Activated CD4-positive, alpha-beta T cell treated with anti-CD3 and anti-CD28 coated beads, Interleukin-2, amount 10 ng/mL, durations not matched to agents 7 days and 5 days (primary cell): ENCODE measurements at regions of chr2 and their contacts with region 1.

Region 1: DNA sequence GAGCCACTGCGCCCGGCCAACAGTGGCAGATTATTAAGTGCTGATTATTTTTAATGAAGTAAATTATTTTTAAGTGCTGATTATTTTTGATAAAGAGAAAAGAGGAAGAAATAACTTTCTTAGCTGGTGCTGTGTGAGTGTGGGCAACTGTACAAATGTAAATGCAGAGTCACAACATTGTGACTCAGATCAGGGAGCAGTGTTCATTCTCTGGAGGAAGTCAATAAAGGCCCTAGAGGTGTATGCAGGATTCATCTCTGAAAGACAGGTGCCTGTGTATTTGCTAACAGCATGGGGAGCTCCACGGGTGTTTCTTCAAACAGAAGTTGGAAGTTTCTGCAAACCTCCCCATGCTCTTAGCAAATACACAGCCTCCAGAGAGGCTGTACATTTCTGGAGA is 6.2 kb downstream of the KRTCAP3 start:
- DNase-seq: no peak
- H3K4me3 Mint-ChIP-seq: no peak overlapping the region
- H3K27ac Mint-ChIP-seq: peak overlapping the region; percentile 38
- H3K4me1 Mint-ChIP-seq: peaks cover 10% of the 10 kb centered on the region
- H3K27me3 Mint-ChIP-seq: no peaks in the 10 kb centered on the region

Region 2: DNA sequence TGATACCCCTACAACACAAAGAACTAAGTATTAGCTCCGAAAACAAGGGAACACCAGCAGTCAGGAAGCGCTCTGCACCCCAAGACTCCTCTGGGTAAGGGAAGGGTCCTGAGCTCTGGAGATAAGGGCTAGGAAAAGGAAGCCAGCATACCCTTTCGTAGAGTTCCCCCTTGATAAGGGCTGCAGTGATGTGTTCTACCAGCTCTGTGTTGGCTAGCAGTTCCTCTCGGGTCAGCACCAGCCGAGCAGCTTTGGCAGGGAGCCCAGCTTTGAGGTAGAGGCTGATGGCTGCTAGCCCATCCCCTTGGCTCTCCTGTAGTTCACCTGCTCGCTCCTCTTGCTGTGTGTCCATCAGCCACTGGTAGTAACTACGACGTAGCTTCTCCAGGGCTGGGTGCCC is 12.7 kb after region 1 on chr2:
- CTCF ChIA-PET with region 1: interaction called, 10 read pairs
- POLR2A ChIA-PET with region 1: no interaction called
- DNase-seq: no peak
- H3K4me3 Mint-ChIP-seq: no peak overlapping the region
- H3K27ac Mint-ChIP-seq: no peak overlapping the region
- H3K4me1 Mint-ChIP-seq: no peaks in the 10 kb centered on the region
- H3K27me3 Mint-ChIP-seq: no peaks in the 10 kb centered on the region